Activated CD4-positive, alpha-beta T cell treated with anti-CD3 and anti-CD28 coated beads, Interleukin-2, amount 10 ng/mL, durations not matched to agents 24 days and 14 days (primary cell): ENCODE measurements at regions of chr19 and their contacts with region 1.

Region 1: DNA sequence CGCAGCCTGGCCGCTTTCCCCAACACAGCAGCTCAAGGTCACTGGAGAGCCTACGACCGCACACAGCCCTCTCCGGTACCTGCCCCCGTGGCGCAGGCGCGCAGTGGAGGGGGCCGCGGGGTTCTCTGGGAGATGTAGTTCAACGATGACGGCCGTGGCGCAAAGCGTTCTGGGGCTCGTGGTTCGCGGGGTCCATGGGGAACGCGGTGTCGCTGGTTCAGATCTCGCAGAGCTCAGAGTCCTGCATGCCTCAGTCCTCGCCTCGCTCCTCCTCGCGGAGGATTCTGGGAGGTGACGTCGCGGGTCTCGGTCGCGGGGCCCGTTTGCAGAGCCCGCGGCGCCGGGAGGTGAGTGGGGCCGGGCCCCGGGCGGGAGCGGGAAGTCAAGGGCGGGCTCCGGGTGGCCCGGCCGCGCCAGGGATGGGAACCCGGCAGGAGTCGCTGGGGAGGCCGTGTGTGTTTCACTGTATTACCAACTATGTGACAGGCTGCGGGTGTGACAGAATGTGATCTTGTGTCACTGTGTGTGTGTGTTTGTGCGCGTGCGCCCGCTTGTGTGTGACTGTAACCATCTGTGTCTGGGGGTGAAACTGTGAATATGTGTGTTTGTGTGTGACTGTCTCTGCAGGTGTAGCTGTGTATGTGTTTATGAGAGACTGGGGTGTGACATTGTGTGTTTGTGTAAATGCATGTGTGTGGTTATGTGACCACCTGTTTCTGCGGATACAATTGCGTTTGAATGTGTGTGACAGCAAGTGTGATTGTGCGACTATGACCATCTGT is at the start of gene ZNF527:
- DNase-seq: peak; percentile 99
- H3K4me3 Mint-ChIP-seq: peak within 1 kb of the TSS; percentile 94
- H3K27ac Mint-ChIP-seq: peak within 1 kb of the TSS; percentile 91
- H3K4me1 Mint-ChIP-seq: peaks cover 9% of the 10 kb centered on the region
- H3K27me3 Mint-ChIP-seq: no peaks in the 10 kb centered on the region
- total RNA-seq, gene ZNF527: 3.5 and 4.9 TPM in 2 replicates

Region 2: GRCh38 chr19:36973021-36973843 is 397.8 kb before region 1 on chr19:
- intact Hi-C with region 1: loop called (anchors 1 kb)
- DNase-seq: peak; percentile 92
- H3K4me3 Mint-ChIP-seq: peak overlapping the region; percentile 99
- H3K27ac Mint-ChIP-seq: peak overlapping the region; percentile 92
- H3K4me1 Mint-ChIP-seq: peaks cover 12% of the 10 kb centered on the region
- H3K27me3 Mint-ChIP-seq: no peaks in the 10 kb centered on the region

Region 3: GRCh38 chr19:37313335-37313627 is 57.8 kb before region 1 on chr19:
- intact Hi-C with region 1: loop called (anchors 1 kb)
- DNase-seq: no peak
- H3K4me3 Mint-ChIP-seq: peak overlapping the region; percentile 71
- H3K27ac Mint-ChIP-seq: no peak overlapping the region
- H3K4me1 Mint-ChIP-seq: peaks cover 12% of the 10 kb centered on the region
- H3K27me3 Mint-ChIP-seq: no peaks in the 10 kb centered on the region

Region 4: DNA sequence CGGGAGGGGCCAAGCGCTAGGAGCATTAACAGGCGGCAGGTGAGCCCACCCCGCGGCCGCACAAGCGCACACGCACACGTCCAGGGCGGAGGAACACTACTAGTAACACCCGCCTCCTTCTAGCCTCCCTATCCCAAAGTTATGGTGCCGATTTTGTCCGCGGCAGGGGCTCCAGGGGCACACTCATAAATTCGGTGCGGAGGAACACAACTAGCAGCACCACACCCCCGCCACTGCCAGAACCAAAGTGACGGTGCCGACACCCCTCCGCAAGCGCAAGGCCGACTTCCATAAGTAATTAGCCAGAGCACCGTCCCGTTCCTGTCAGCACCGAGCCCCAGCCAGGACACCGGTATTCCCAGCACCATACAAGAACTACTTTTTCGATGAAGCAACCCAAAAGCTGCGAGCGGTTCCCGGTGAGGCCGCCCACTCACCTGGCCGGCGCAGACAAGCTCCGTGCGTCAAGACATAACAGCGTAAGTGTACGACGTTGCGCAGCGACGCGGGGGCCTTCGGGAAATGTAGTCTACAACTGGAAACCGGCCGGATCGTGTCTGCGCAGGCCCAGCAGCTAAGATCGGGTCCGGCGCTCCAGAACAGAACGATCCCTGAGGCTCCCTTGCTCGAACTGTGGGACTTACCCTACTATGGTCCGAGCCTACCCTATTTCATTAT is 223.4 kb after region 1 on chr19 and contains the starts of genes ZNF540 and ZNF571:
- intact Hi-C with region 1: loop called (anchors 1 kb)
- DNase-seq: peak; percentile 96
- H3K4me3 Mint-ChIP-seq: peak within 1 kb of the TSS; percentile 98
- H3K27ac Mint-ChIP-seq: peak within 1 kb of the TSS; percentile 97
- H3K4me1 Mint-ChIP-seq: peaks cover 21% of the 10 kb centered on the region
- H3K27me3 Mint-ChIP-seq: no peaks in the 10 kb centered on the region
- total RNA-seq, gene ZNF540: 0.38 and 0.49 TPM in 2 replicates
- total RNA-seq, gene ZNF571: 0.47 and 1.1 TPM in 2 replicates

Region 5: DNA sequence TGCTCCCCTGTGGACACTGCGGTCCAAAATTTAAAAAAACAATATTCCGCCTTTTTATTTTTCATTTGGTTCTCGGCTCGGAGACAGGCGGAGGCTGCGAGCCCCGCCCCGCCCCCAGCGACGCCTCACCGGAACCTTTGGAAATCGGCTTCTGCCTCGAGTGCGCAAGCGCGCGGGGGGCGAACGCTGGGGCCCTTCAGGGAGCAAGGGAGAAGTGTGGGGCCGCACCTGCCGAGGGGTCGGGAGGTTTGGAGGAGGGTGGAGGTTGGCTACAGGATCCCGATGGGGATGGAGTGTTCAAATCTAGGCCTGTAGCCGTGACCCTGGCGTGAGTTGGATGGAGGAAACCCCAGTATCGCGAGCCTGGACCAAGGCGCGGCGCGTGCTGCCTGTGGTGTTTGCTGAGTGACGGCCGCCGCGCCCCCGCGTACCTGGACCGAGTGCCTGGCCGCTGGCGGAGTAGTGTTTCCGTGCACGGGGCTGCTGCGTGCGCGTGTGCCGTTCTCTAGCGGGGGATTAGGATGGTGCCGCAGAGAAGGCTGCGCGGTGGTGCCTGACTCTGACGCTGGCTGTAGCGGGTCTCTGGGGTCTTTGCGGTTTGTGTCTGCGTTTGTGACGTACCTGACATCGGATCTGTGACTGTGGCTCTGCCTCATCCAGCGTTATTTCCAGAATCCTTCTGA is 284.8 kb after region 1 on chr19:
- intact Hi-C with region 1: loop called (anchors 2 kb)
- DNase-seq: peak; percentile 96
- H3K4me3 Mint-ChIP-seq: peak overlapping the region; percentile 99
- H3K27ac Mint-ChIP-seq: peak overlapping the region; percentile 98
- H3K4me1 Mint-ChIP-seq: peaks cover 28% of the 10 kb centered on the region
- H3K27me3 Mint-ChIP-seq: no peaks in the 10 kb centered on the region

Region 6: DNA sequence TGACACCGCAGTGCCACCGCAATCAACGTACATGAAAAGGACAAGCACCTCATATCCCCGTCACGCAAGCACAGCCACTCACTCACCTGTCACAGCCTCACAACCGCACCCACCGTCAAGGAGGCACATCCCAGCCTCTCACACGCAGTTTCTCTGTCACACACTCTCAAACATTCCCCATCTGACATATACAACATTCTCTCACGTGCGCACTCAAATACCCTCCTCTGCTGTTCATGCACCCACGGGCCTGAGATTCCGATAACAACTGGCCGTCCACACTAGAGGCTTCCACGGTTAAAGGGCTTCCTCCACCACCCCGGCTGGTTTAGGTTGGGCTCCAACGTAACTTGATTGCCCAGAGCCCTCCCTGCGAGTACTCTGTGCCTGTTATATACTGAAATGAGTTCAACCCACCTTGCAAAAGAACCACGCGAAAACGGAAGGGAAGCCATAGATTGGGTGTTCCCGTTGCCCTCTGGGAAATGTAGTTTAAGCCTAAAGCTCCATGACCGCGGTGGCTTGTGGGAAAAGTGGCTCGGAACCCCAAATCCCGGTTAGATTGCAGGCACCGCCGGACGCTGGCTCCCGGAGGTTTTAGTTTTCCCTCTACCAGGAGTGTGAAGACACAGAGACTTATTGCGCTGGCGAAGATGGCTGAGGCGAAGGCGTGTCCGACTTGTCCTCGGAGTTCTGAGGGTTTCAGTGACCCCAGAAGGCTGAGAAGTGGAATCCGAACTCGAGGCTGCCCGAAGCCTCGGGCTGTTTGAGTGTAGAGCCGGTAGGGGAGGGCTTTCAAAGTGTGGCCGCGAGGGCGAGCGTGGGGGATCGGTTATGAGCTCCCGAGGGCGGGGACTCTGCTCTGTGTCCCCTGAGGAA is 408.3 kb after region 1 on chr19 and contains the start of gene ZNF573:
- intact Hi-C with region 1: loop called (anchors 1 kb)
- DNase-seq: peak; percentile 93
- H3K4me3 Mint-ChIP-seq: peak within 1 kb of the TSS; percentile 96
- H3K27ac Mint-ChIP-seq: peak within 1 kb of the TSS; percentile 92
- H3K4me1 Mint-ChIP-seq: peaks cover 11% of the 10 kb centered on the region
- H3K27me3 Mint-ChIP-seq: no peaks in the 10 kb centered on the region
- total RNA-seq, gene ZNF573: 6.5 and 6.8 TPM in 2 replicates